PC-3 (cell line): ENCODE measurements at regions of chr22 and their contacts with region 1.

Region 1: GRCh38 chr22:50599786-50600455 is 672 bp upstream of the MAPK8IP2 start:
- DNase-seq: peak; percentile 14
- ATAC-seq: peak; percentile 81
- H3K4me3 ChIP-seq: no peak overlapping the region
- H3K27ac ChIP-seq: no peak overlapping the region
- H3K4me1 ChIP-seq: no peaks in the 10 kb centered on the region
- H3K27me3 ChIP-seq: no peaks in the 10 kb centered on the region
- CTCF ChIP-seq: no peak

Region 2: GRCh38 chr22:50551160-50551752 is 48.7 kb before region 1 on chr22:
- CTCF ChIA-PET with region 1: no interaction called
- POLR2A ChIA-PET with region 1: interaction called, 12 read pairs
- intact Hi-C with region 1: no loop called
- DNase-seq: no peak
- ATAC-seq: no peak
- H3K4me3 ChIP-seq: no peak overlapping the region
- H3K27ac ChIP-seq: no peak overlapping the region
- H3K4me1 ChIP-seq: no peaks in the 10 kb centered on the region
- H3K27me3 ChIP-seq: no peaks in the 10 kb centered on the region
- CTCF ChIP-seq: no peak